Calu3 (cell line): ENCODE measurements at regions of chr1 and their contacts with region 1.

Region 1: GRCh38 chr1:40183055-40183710 is 22.0 kb downstream of the RLF start:
- DNase-seq: peak; percentile 19
- H3K4me3 Mint-ChIP-seq: no peak overlapping the region
- H3K27ac Mint-ChIP-seq: no peak overlapping the region
- H3K4me1 Mint-ChIP-seq: peaks cover 33% of the 10 kb centered on the region
- H3K27me3 Mint-ChIP-seq: no peaks in the 10 kb centered on the region
- CTCF ChIP-seq: peak; percentile 39

Region 2: DNA sequence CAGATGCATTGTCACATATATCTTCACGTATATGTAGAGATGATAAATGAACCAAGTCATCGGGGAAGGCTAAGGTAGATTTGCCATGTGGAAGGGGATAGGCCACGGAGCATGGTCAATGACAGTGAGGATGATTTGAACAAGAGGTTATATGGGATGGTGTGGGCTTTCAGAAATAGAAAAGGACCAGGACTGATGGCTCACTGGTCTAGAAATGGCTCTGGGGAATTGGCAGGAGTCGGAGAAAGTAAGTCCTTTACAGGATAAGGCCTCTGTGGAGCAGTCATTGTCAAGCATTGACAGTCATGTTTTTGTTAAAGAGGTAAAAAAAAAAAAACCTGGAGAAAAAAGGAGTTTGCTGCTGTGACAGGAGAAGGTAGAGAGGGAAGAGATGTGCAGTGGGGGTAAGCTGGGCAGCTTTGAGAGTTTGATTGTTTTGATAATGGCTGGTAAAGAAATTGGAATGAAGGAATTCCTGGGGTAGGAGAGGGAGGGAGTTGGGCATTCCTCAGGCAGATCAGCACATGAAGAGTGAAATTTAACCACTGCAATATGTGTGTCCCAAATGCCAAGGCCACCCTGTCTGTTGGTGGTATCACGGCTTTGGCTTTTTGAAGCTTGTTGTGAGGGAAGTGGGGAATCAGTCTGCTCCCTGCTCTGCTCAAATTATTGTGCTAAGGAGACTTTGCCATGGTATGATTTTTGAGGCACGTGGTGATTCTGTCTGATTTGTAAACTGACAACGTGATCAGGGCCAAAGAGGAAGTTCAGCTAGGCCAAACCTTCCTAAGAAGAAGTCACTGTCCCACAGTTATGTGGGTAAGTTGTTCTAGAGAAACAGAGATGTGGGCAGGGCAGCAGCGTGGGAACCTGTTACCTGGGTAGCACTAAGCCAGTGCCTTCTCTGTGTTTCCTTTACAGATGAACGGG is 952.7 kb before region 1 on chr1:
- CTCF ChIA-PET with region 1: no interaction called
- intact Hi-C with region 1: no loop called
- DNase-seq: no peak
- H3K4me3 Mint-ChIP-seq: no peak overlapping the region
- H3K27ac Mint-ChIP-seq: no peak overlapping the region
- H3K4me1 Mint-ChIP-seq: peaks cover 8% of the 10 kb centered on the region
- H3K27me3 Mint-ChIP-seq: no peaks in the 10 kb centered on the region
- CTCF ChIP-seq: no peak

Region 3: DNA sequence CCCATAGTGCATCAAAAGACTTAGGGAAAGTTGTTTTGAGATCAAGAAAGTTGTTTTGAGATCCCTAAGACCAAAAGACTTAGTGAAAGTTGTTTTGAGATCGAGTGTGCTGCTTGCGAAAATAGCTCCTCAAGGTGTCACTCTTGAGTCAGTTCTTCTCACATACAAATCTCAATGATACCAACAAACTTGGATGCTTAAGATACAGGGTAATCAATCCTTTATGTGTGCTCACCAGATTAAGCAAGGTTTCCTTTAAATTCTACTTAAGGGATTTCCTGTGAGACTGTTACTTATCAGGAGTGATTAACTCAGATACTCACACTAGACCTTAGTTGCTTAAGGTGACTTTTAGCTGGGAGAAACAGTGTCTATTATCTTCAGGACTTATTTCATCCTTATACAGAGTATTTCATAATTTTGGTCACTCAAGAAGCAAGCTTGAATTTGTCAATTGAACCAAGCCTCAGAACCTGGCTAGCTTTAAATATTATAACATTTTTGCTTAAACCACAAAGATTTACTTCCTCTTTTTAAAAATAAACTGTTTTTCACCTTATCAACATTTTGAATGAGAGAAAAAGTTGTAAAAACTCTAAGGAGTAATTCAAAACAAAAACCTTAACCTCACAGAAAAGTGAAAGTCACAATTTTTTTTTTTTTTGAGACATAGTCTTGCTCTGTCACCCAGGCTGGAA is 30.0 kb before region 1 on chr1:
- CTCF ChIA-PET with region 1: interaction called, 10 read pairs
- intact Hi-C with region 1: no loop called
- DNase-seq: no peak
- H3K4me3 Mint-ChIP-seq: no peak overlapping the region
- H3K27ac Mint-ChIP-seq: no peak overlapping the region
- H3K4me1 Mint-ChIP-seq: no peaks in the 10 kb centered on the region
- H3K27me3 Mint-ChIP-seq: peaks cover 4% of the 10 kb centered on the region
- CTCF ChIP-seq: peak; percentile 52

Region 4: DNA sequence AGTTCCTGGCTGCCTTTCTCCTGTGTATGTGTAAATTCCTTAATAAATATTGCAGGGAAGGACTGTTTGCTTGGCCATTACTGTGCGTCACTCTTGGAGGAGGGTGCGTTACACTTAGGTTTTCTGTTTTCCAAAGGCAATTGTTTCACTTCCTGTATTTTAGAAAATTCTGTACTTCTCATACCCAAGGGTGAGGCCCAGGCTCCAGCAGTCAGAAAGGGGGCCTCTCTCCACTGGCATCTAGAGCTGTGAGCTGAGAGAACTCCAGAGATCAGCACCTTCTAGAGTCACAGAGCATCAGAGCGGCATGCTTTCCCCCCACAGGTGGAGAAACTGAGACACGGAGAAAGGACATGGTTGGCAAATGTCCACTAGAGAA is 240.1 kb after region 1 on chr1:
- CTCF ChIA-PET with region 1: no interaction called
- intact Hi-C with region 1: no loop called
- DNase-seq: no peak
- H3K4me3 Mint-ChIP-seq: no peak overlapping the region
- H3K27ac Mint-ChIP-seq: no peak overlapping the region
- H3K4me1 Mint-ChIP-seq: no peaks in the 10 kb centered on the region
- H3K27me3 Mint-ChIP-seq: no peaks in the 10 kb centered on the region
- CTCF ChIP-seq: no peak